K562 (cell line): ENCODE measurements at regions of chr5 and their contacts with region 1.

Region 1: GRCh38 chr5:112737463-112738190 is at the start of gene APC:
- DNase-seq: peak; percentile 91 to 95 (median 93)
- ATAC-seq: peak; percentile 93
- H3K4me3 ChIP-seq: peak within 1 kb of the TSS; percentile 50
- H3K27ac ChIP-seq: peak within 1 kb of the TSS; percentile 79
- H3K4me1 ChIP-seq: peaks cover 17 to 20% of the 10 kb centered on the region in 2 experiments
- H3K27me3 ChIP-seq: no peaks in the 10 kb centered on the region
- CTCF ChIP-seq: 0 out of 6 replicates have a peak, but pooled peaks of 2 of the 3 experiments have one; percentile 5
- EP300 ChIP-seq: peak; percentile 34; the same call in 1 of the 2 replicates
- POLR2A ChIP-seq: peak; percentile 80
- RAD21 ChIP-seq: no peak
- polyA plus RNA-seq, gene APC: 5.7 to 9.3 TPM

Region 2: GRCh38 chr5:112697833-112698232 is 39.8 kb before region 1 on chr5:
- CTCF ChIA-PET with region 1: no interaction called
- POLR2A ChIA-PET with region 1: interaction called, 5 read pairs
- in situ Hi-C with region 1: no loop called
- intact Hi-C with region 1: loop called (anchors 2 kb)
- DNase-seq: peak in 1 of 4 experiments; percentile 48
- ATAC-seq: peak; percentile 24; the same call in 1 of the 3 replicates
- H3K4me3 ChIP-seq: no peak overlapping the region
- H3K27ac ChIP-seq: no peak overlapping the region
- H3K4me1 ChIP-seq: peaks cover 0 to 18% of the 10 kb centered on the region in 2 experiments; a peak in 2 of 5 replicates
- H3K27me3 ChIP-seq: no peaks in the 10 kb centered on the region
- CTCF ChIP-seq: no peak
- EP300 ChIP-seq: no peak
- POLR2A ChIP-seq: no peak
- RAD21 ChIP-seq: no peak